Panc1 (cell line): ENCODE measurements at regions of chr16 and their contacts with region 1.

Region 1: GRCh38 chr16:78099372-78100161 is at the start of gene WWOX:
- DNase-seq: peak; percentile 82
- ATAC-seq: peak; percentile 98
- H3K4me3 ChIP-seq: peak within 1 kb of the TSS; percentile 75 to 80
- H3K27ac ChIP-seq: peak within 1 kb of the TSS; percentile 80
- H3K4me1 ChIP-seq: peaks cover 4% of the 10 kb centered on the region; the same call in 1 of the 2 replicates
- H3K27me3 ChIP-seq: no peaks in the 10 kb centered on the region
- CTCF ChIP-seq: peak; percentile 92
- total RNA-seq, gene WWOX: 12.5 TPM

Region 2: GRCh38 chr16:77918809-77919707 is 180.5 kb before region 1 on chr16:
- CTCF ChIA-PET with region 1: no interaction called
- POLR2A ChIA-PET with region 1: no interaction called
- in situ Hi-C with region 1: no loop called
- intact Hi-C with region 1: no loop called
- DNase-seq: no peak
- ATAC-seq: no peak
- H3K4me3 ChIP-seq: no peak overlapping the region
- H3K27ac ChIP-seq: no peak overlapping the region
- H3K4me1 ChIP-seq: no peaks in the 10 kb centered on the region
- H3K27me3 ChIP-seq: peaks cover 5% of the 10 kb centered on the region; the same call in 1 of the 2 replicates
- CTCF ChIP-seq: no peak

Region 3: GRCh38 chr16:78385086-78385805 is 285.7 kb after region 1 on chr16:
- CTCF ChIA-PET with region 1: no interaction called
- POLR2A ChIA-PET with region 1: no interaction called
- in situ Hi-C with region 1: no loop called
- intact Hi-C with region 1: no loop called
- DNase-seq: no peak
- ATAC-seq: no peak
- H3K4me3 ChIP-seq: no peak overlapping the region
- H3K27ac ChIP-seq: no peak overlapping the region
- H3K4me1 ChIP-seq: no peaks in the 10 kb centered on the region
- H3K27me3 ChIP-seq: no peaks in the 10 kb centered on the region
- CTCF ChIP-seq: no peak

Region 4: GRCh38 chr16:78727536-78727935 is 628.0 kb after region 1 on chr16:
- CTCF ChIA-PET with region 1: interaction called, 11 read pairs
- POLR2A ChIA-PET with region 1: no interaction called
- in situ Hi-C with region 1: no loop called
- intact Hi-C with region 1: no loop called
- DNase-seq: no peak
- ATAC-seq: no peak
- H3K4me3 ChIP-seq: no peak overlapping the region
- H3K27ac ChIP-seq: no peak overlapping the region
- H3K4me1 ChIP-seq: no peaks in the 10 kb centered on the region
- H3K27me3 ChIP-seq: no peaks in the 10 kb centered on the region
- CTCF ChIP-seq: no peak